Esophagus squamous epithelium (tissue), 5 donors: ENCODE measurements at regions of chr9 and their contacts with region 1.

Region 1: DNA sequence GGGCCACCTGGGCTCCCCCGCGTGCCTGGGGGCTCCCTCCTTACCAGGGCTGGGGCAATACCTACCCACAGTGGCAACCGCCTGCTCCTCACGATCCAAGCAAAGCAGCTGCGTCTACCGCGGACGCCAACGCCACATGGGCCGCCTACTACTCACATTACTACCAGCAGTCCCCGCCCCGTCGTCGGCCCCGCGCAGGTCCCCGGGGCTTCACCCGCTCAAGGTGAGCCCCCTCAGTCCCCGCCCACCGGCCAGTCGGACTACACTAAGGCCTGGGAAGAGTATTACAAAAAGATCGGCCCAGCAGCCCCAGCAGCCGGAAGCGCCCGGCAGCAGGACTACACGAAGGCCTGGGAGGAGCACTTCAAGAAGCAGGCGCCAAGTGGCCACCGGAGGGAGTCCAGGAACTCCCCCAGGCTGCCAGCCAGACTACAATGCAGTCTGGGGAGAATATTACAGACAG is 106.0 kb upstream of the MTAP start:
- DNase-seq: no peak
- H3K4me3 ChIP-seq: no peak overlapping the region
- H3K27ac ChIP-seq: no peak overlapping the region
- H3K4me1 ChIP-seq: no peaks in the 10 kb centered on the region
- H3K27me3 ChIP-seq: no peaks in the 10 kb centered on the region
- CTCF ChIP-seq: no peak
- POLR2A ChIP-seq: no peak

Region 2: DNA sequence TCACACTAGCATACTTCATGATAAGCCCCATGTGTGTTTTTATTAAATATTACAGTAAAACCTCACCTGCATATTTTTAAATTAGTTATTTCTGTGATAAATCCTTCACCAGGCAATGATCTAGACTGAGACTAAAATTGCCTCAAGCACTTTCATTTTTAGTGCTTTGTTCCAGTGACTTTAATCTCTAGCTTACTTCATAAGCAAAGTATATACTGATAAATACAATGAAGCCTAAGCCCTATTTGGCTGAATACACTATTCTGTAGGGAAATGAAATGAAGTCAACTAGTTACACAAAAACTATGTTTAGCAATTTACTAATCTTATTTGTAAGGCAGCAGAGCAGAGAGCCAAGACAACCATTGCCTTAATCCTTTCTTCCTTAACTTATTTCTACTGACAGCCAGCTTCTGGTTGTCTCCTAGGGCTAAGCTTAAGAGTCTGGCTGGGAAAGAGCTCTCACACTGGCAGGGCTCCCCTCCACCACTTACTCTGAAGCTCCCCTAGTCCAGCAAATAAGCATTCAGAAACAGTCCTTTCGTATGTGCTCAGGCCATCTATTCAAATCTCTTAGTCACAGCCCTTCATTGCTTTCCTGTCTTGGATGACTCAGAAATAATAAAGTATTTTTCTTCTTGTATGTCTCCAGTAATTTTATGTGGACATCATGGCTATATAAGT is 74.6 kb after region 1 on chr9:
- intact Hi-C with region 1: loop called (anchors 10 kb)
- DNase-seq: no peak
- H3K4me3 ChIP-seq: no peak overlapping the region
- H3K27ac ChIP-seq: peak overlapping the region in 2 of 4 donors; percentile 37 to 53
- H3K4me1 ChIP-seq: peaks cover 3 to 21% (median 7%) of the 10 kb centered on the region in 3 donors
- H3K27me3 ChIP-seq: peaks cover 0 to 51% (median 0%) of the 10 kb centered on the region in 4 donors
- CTCF ChIP-seq: no peak
- POLR2A ChIP-seq: no peak

Region 3: GRCh38 chr9:21958833-21959232 is 262.4 kb after region 1 on chr9:
- intact Hi-C with region 1: no loop called
- DNase-seq: no peak
- H3K4me3 ChIP-seq: no peak overlapping the region
- H3K27ac ChIP-seq: no peak overlapping the region
- H3K4me1 ChIP-seq: no peaks in the 10 kb centered on the region
- H3K27me3 ChIP-seq: peaks cover 0 to 35% (median 0%) of the 10 kb centered on the region in 4 donors
- CTCF ChIP-seq: no peak
- POLR2A ChIP-seq: no peak

Region 4: GRCh38 chr9:22169727-22170503 is 473.5 kb after region 1 on chr9:
- intact Hi-C with region 1: no loop called
- DNase-seq: no peak
- H3K4me3 ChIP-seq: no peak overlapping the region
- H3K27ac ChIP-seq: no peak overlapping the region
- H3K4me1 ChIP-seq: no peaks in the 10 kb centered on the region
- H3K27me3 ChIP-seq: no peaks in the 10 kb centered on the region
- CTCF ChIP-seq: no peak
- POLR2A ChIP-seq: no peak